Activated CD8-positive, alpha-beta T cell treated with anti-CD3 and anti-CD28 coated beads for 36 hours (primary cell): ENCODE measurements at regions of chr16 and their contacts with region 1.

Region 1: DNA sequence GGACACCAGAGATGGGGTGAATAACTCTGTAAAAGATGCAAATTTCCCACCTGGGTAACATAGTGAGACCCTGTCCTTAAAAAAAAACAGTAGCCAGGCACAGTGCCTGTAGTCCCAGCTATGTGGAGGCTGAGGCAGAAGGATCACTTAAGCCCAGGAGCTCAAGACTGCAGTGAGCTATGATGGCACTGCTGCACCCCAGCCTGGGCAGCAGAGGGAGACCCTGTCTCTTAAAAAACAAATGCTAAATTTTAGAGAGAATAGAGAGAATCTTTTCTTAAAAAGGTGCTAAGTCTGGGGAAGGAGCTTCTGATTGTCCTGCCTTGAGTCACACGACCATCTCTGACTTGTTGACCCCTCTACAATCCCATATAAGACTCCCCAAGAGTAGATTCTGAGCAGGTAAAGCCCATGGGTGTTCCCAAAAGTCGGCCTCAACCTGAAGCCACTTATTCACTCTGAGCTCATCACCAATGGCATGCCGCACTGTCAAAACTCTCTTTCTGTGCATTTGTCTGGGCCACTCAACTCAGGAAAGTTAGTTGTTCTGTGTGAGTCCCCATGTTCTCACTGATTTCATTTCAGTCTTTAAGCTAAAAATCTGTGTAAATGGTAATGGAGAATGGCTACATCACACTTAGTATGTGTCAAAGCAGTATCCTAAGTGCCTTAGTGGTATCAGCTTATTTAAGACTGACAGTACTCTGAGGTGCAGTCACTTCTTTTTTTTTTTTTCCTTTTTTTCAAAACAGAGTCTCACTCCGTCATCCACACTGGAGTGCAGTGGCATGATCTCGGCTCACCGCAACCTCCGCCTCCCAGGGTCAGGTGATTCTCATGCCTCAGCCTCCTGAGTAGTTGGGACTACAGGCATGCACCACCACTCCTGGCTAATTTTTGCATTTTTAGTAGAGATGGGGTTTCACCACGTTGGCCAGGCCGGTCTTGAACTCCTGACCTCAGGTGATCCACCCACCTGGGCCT is 41.6 kb downstream of the PRKCB start:
- DNase-seq: no peak
- ATAC-seq: peak; percentile 27
- H3K4me3 Mint-ChIP-seq: no peak overlapping the region
- H3K27ac Mint-ChIP-seq: peak overlapping the region; percentile 28
- H3K4me1 Mint-ChIP-seq: peaks cover 77% of the 10 kb centered on the region
- H3K27me3 Mint-ChIP-seq: no peaks in the 10 kb centered on the region
- CTCF ChIP-seq: peak; percentile 19

Region 2: GRCh38 chr16:23842137-23842600 is 35.2 kb before region 1 on chr16:
- CTCF ChIA-PET with region 1: interaction called, 5 read pairs
- POLR2A ChIA-PET with region 1: interaction called, 4 read pairs
- intact Hi-C with region 1: loop called (anchors 5 kb)
- DNase-seq: peak; percentile 81
- ATAC-seq: peak; percentile 88
- H3K4me3 Mint-ChIP-seq: peak overlapping the region; percentile 34
- H3K27ac Mint-ChIP-seq: peak overlapping the region; percentile 92
- H3K4me1 Mint-ChIP-seq: peaks cover 82% of the 10 kb centered on the region
- H3K27me3 Mint-ChIP-seq: no peaks in the 10 kb centered on the region
- CTCF ChIP-seq: no peak

Region 3: DNA sequence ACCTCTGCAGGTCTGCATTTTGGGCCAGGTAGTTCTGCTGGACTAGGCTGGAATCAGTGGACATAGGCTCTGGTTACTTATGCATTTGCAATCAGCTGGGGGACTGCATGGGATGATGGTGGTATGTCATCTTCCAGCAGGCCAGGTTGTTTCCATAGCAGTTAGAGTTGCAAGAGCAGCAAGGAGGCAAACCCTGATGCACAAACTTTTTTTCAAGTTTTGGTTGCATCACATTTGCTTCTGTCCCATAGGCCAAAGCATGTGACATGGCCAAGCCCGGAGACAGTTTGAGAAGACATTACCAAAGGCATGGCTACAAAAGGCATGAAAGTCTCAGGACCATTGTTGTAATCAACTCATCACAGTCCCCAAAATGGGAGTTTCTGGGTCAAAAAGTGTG is 16.6 kb after region 1 on chr16:
- CTCF ChIA-PET with region 1: interaction called, 13 read pairs
- POLR2A ChIA-PET with region 1: interaction called, 4 read pairs
- intact Hi-C with region 1: no loop called
- DNase-seq: no peak
- ATAC-seq: no peak
- H3K4me3 Mint-ChIP-seq: no peak overlapping the region
- H3K27ac Mint-ChIP-seq: no peak overlapping the region
- H3K4me1 Mint-ChIP-seq: peaks cover 53% of the 10 kb centered on the region
- H3K27me3 Mint-ChIP-seq: no peaks in the 10 kb centered on the region
- CTCF ChIP-seq: no peak

Region 4: GRCh38 chr16:23924128-23924527 is 46.7 kb after region 1 on chr16:
- CTCF ChIA-PET with region 1: no interaction called
- POLR2A ChIA-PET with region 1: no interaction called
- intact Hi-C with region 1: no loop called
- DNase-seq: peak; percentile 26
- ATAC-seq: peak; percentile 60
- H3K4me3 Mint-ChIP-seq: no peak overlapping the region
- H3K27ac Mint-ChIP-seq: peak overlapping the region; percentile 40
- H3K4me1 Mint-ChIP-seq: peaks cover 68% of the 10 kb centered on the region
- H3K27me3 Mint-ChIP-seq: no peaks in the 10 kb centered on the region
- CTCF ChIP-seq: no peak